H1 (cell line): ENCODE measurements at regions of chr13 and their contacts with region 1.

Region 1: DNA sequence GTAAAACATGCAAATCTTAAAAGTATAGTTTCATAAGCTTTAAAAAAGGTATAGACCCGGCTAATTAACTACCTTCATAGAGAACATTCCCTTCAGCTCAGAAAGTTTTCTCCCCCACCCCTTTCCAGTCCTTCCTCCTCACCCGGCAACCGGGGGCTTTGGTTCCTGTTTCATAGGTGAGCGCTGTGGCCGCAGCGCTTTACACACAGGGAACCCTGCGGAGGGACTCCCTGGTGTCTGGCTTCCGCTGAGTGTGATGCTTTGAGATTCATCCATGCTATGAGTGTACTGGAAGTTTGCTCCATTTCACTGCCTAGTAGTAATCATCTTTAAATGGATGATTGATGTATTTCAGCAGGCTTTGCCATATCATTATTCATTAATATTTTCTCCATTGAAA is 26.0 kb upstream of the PABPC3 start:
- DNase-seq: no peak
- H3K4me3 ChIP-seq: no peak overlapping the region
- H3K27ac ChIP-seq: no peak overlapping the region
- H3K4me1 ChIP-seq: peaks cover 3 to 6% (median 4%) of the 10 kb centered on the region in 4 experiments; a peak in 3 of 7 replicates
- H3K27me3 ChIP-seq: no peaks in the 10 kb centered on the region
- CTCF ChIP-seq: no peak
- EP300 ChIP-seq: no peak
- POLR2A ChIP-seq: no peak
- RAD21 ChIP-seq: no peak

Region 2: GRCh38 chr13:25046985-25047511 is 22.9 kb before region 1 on chr13:
- CTCF ChIA-PET with region 1: no interaction called
- POLR2A ChIA-PET with region 1: no interaction called
- DNase-seq: peak in 1 of 2 experiments; percentile 80
- H3K4me3 ChIP-seq: peak overlapping the region; percentile 65 to 98 (median 72)
- H3K27ac ChIP-seq: no peak overlapping the region
- H3K4me1 ChIP-seq: peaks cover 0 to 2% (median 0%) of the 10 kb centered on the region in 4 experiments; a peak in 3 of 7 replicates
- H3K27me3 ChIP-seq: peaks cover 0 to 16% (median 10%) of the 10 kb centered on the region in 4 experiments; a peak in 4 of 7 replicates
- CTCF ChIP-seq: no peak
- EP300 ChIP-seq: no peak
- POLR2A ChIP-seq: peak in 1 of 2 experiments; percentile 39; a peak in 1 of 3 replicates
- RAD21 ChIP-seq: no peak

Region 3: GRCh38 chr13:25085125-25085742 is 15.3 kb after region 1 on chr13:
- CTCF ChIA-PET with region 1: interaction called, 20 read pairs
- POLR2A ChIA-PET with region 1: interaction called, 3 read pairs
- DNase-seq: no peak
- H3K4me3 ChIP-seq: no peak overlapping the region
- H3K27ac ChIP-seq: no peak overlapping the region
- H3K4me1 ChIP-seq: no peaks in the 10 kb centered on the region
- H3K27me3 ChIP-seq: no peaks in the 10 kb centered on the region
- CTCF ChIP-seq: peak; percentile 29 to 76 (median 67)
- EP300 ChIP-seq: no peak
- POLR2A ChIP-seq: no peak
- RAD21 ChIP-seq: peak; percentile 72 to 80

Region 4: GRCh38 chr13:25384752-25385441 is 315.0 kb after region 1 on chr13:
- CTCF ChIA-PET with region 1: no interaction called
- POLR2A ChIA-PET with region 1: no interaction called
- DNase-seq: no peak
- H3K4me3 ChIP-seq: no peak overlapping the region
- H3K27ac ChIP-seq: no peak overlapping the region
- H3K4me1 ChIP-seq: peaks cover 2 to 6% (median 3%) of the 10 kb centered on the region in 4 experiments; a peak in 3 of 7 replicates
- H3K27me3 ChIP-seq: no peaks in the 10 kb centered on the region
- CTCF ChIP-seq: no peak
- EP300 ChIP-seq: no peak
- POLR2A ChIP-seq: no peak
- RAD21 ChIP-seq: no peak